CD4-positive, alpha-beta memory T cell (primary cell): ENCODE measurements at regions of chr15 and their contacts with region 1.

Region 1: DNA sequence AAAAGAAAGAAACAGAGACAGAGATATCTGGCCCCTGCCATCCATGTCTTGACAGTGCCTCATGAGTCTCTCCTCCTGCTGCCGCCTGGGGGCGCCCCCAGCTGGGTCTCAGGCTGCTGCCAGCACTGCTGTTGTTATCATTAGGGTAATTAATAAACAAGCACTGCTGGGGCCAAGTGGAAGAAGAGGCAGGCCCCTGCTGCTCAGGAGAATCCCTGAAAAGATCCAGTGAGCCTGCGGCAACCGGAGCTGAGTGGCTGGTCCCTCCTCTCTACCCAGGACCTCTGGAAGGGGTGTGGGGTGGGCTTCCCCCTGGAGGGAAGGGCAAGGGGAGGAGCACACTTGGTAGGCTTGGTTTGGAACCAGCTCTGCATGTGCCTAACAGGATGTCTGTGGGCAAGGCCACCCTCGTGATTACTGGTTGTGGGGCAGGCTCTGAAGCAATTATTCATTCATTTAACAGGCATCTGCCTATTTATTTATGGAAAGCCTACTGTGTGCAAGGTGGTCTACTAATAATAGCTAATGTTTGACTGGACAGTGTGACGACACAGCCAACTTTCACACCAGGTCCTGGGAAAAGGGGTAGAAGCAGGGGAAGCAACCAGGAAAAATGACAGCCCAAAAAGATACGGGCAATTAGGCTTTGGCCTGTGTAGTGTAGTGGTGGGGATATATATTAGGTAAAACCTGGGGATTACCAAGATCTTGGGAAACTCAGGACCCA is 1.2 kb upstream of the TYRO3 start:
- DNase-seq: peak; percentile 80 to 87 (median 84)
- H3K4me3 ChIP-seq: peak overlapping the region in 1 of 2 donors; percentile 32
- H3K4me3 Mint-ChIP-seq: peak overlapping the region; percentile 82 to 98 (median 89)
- H3K27ac ChIP-seq: peak overlapping the region; percentile 17
- H3K27ac Mint-ChIP-seq: peak overlapping the region; percentile 90 to 98 (median 93)
- H3K4me1 ChIP-seq: peaks cover 19% of the 10 kb centered on the region
- H3K4me1 Mint-ChIP-seq: peaks cover 8 to 30% (median 24%) of the 10 kb centered on the region in 4 donors
- H3K27me3 ChIP-seq: peaks cover 4% of the 10 kb centered on the region
- H3K27me3 Mint-ChIP-seq: peaks cover 0 to 9% of the 10 kb centered on the region in 2 donors

Region 2: GRCh38 chr15:41501191-41501917 is 56.5 kb before region 1 on chr15:
- CTCF ChIA-PET with region 1: no interaction called
- POLR2A ChIA-PET with region 1: interaction called, 3 read pairs
- intact Hi-C with region 1: loop called (anchors 5 kb)
- DNase-seq: peak in 3 of 5 donors; percentile 37 to 65 (median 39)
- H3K4me3 ChIP-seq: peak overlapping the region in 1 of 2 donors; percentile 50
- H3K4me3 Mint-ChIP-seq: peak overlapping the region; percentile 73 to 84 (median 78)
- H3K27ac ChIP-seq: no peak overlapping the region
- H3K27ac Mint-ChIP-seq: peak overlapping the region in 4 of 7 donors; percentile 35 to 57 (median 45)
- H3K4me1 ChIP-seq: peaks cover 19% of the 10 kb centered on the region
- H3K4me1 Mint-ChIP-seq: peaks cover 5 to 34% (median 10%) of the 10 kb centered on the region in 4 donors
- H3K27me3 ChIP-seq: peaks cover 9% of the 10 kb centered on the region
- H3K27me3 Mint-ChIP-seq: peaks cover 18 to 29% of the 10 kb centered on the region in 2 donors

Region 3: GRCh38 chr15:41575282-41575681 is 17.4 kb after region 1 on chr15:
- CTCF ChIA-PET with region 1: no interaction called
- POLR2A ChIA-PET with region 1: no interaction called
- intact Hi-C with region 1: no loop called
- DNase-seq: no peak
- H3K4me3 ChIP-seq: no peak overlapping the region
- H3K4me3 Mint-ChIP-seq: no peak overlapping the region
- H3K27ac ChIP-seq: no peak overlapping the region
- H3K27ac Mint-ChIP-seq: no peak overlapping the region
- H3K4me1 ChIP-seq: no peaks in the 10 kb centered on the region
- H3K4me1 Mint-ChIP-seq: no peaks in the 10 kb centered on the region
- H3K27me3 ChIP-seq: no peaks in the 10 kb centered on the region
- H3K27me3 Mint-ChIP-seq: no peaks in the 10 kb centered on the region

Region 4: GRCh38 chr15:41585127-41586047 is 27.6 kb after region 1 on chr15:
- CTCF ChIA-PET with region 1: interaction called, 9 read pairs
- POLR2A ChIA-PET with region 1: interaction called, 5 read pairs
- intact Hi-C with region 1: loop called (anchors 1 kb)
- DNase-seq: peak; percentile 25 to 58 (median 30)
- H3K4me3 ChIP-seq: no peak overlapping the region
- H3K4me3 Mint-ChIP-seq: peak overlapping the region; percentile 76 to 86 (median 83)
- H3K27ac ChIP-seq: no peak overlapping the region
- H3K27ac Mint-ChIP-seq: peak overlapping the region in 1 of 7 donors; percentile 47
- H3K4me1 ChIP-seq: peaks cover 4% of the 10 kb centered on the region
- H3K4me1 Mint-ChIP-seq: peaks cover 5 to 11% (median 5%) of the 10 kb centered on the region in 4 donors
- H3K27me3 ChIP-seq: peaks cover 5% of the 10 kb centered on the region
- H3K27me3 Mint-ChIP-seq: peaks cover 24 to 29% of the 10 kb centered on the region in 2 donors

Region 5: DNA sequence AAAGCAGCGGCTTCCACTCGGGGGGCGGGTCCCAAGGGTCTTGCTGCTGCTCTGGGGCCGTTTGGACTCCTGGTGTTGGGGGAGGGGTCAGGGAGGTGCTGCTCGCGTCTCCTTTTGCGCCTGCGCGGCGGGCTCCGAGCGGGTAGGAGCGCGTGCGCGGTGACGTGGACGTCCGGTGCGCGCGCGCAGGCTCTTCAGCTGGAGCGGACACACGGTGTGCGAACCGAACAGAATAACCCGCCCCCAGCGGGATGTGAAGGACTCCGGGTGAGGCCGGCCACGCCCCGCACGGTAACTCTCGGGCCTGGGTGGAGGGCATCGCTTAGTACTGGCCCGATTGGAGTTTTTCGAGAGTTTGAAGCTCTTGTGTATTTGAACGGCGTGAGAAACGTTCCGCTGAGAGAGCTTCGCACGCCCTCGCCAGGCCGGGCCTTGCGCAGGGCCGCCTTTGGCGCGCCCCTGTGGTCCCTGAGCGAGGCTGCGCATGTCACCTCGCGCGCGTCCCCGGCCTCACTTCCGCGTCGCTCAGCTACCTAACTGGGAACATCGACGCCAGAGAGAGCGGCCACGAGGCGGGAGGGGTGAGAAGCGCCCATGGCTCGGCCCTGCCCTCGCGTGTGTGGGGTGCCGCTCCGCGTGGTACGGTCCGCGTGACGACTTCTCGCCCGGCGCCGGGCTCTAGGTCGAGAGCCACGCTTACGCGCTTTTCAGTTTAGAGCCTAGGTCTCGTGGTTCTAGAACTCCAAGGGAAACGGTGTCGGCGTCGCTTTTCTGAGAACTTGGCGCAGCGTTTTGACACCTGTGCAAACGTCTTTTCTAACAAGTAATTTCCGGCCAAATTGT is 102.6 kb after region 1 on chr15 and contains the start of gene MGA:
- CTCF ChIA-PET with region 1: interaction called, 7 read pairs
- POLR2A ChIA-PET with region 1: interaction called, 7 read pairs
- intact Hi-C with region 1: loop called (anchors 1 kb)
- DNase-seq: peak; percentile 90 to 94 (median 92)
- H3K4me3 ChIP-seq: peak within 1 kb of the TSS; percentile 71 to 72
- H3K4me3 Mint-ChIP-seq: peak within 1 kb of the TSS; percentile 84 to 96 (median 94)
- H3K27ac ChIP-seq: peak within 1 kb of the TSS; percentile 67
- H3K27ac Mint-ChIP-seq: peak within 1 kb of the TSS; percentile 91 to 99 (median 97)
- H3K4me1 ChIP-seq: peaks cover 59% of the 10 kb centered on the region
- H3K4me1 Mint-ChIP-seq: peaks cover 30 to 65% (median 43%) of the 10 kb centered on the region in 4 donors
- H3K27me3 ChIP-seq: no peaks in the 10 kb centered on the region
- H3K27me3 Mint-ChIP-seq: peaks cover 0 to 1% of the 10 kb centered on the region in 2 donors
- total RNA-seq, gene MGA: 70.1 to 74.9 TPM

Region 6: GRCh38 chr15:41811432-41812195 is 253.8 kb after region 1 on chr15:
- CTCF ChIA-PET with region 1: interaction called, 13 read pairs
- POLR2A ChIA-PET with region 1: no interaction called
- intact Hi-C with region 1: loop called (anchors 1 kb)
- DNase-seq: peak; percentile 68 to 75 (median 70)
- H3K4me3 ChIP-seq: no peak overlapping the region
- H3K4me3 Mint-ChIP-seq: peak overlapping the region in 1 of 8 donors; percentile 1
- H3K27ac ChIP-seq: no peak overlapping the region
- H3K27ac Mint-ChIP-seq: peak overlapping the region in 4 of 7 donors; percentile 29 to 57 (median 37)
- H3K4me1 ChIP-seq: peaks cover 12% of the 10 kb centered on the region
- H3K4me1 Mint-ChIP-seq: peaks cover 7 to 21% (median 13%) of the 10 kb centered on the region in 4 donors
- H3K27me3 ChIP-seq: no peaks in the 10 kb centered on the region
- H3K27me3 Mint-ChIP-seq: no peaks in the 10 kb centered on the region

Region 7: GRCh38 chr15:41870689-41871081 is 312.8 kb after region 1 on chr15:
- CTCF ChIA-PET with region 1: no interaction called
- POLR2A ChIA-PET with region 1: no interaction called
- intact Hi-C with region 1: no loop called
- DNase-seq: peak; percentile 67 to 79 (median 71)
- H3K4me3 ChIP-seq: no peak overlapping the region
- H3K4me3 Mint-ChIP-seq: peak overlapping the region in 7 of 8 donors; percentile 12 to 82 (median 64)
- H3K27ac ChIP-seq: no peak overlapping the region
- H3K27ac Mint-ChIP-seq: peak overlapping the region; percentile 13 to 98 (median 96)
- H3K4me1 ChIP-seq: peaks cover 11% of the 10 kb centered on the region
- H3K4me1 Mint-ChIP-seq: peaks cover 8 to 10% (median 9%) of the 10 kb centered on the region in 4 donors
- H3K27me3 ChIP-seq: no peaks in the 10 kb centered on the region
- H3K27me3 Mint-ChIP-seq: no peaks in the 10 kb centered on the region

Region 8: GRCh38 chr15:42056934-42057779 is 499.3 kb after region 1 on chr15:
- CTCF ChIA-PET with region 1: no interaction called
- POLR2A ChIA-PET with region 1: no interaction called
- intact Hi-C with region 1: loop called (anchors 2 kb)
- DNase-seq: peak; percentile 22 to 83 (median 58)
- H3K4me3 ChIP-seq: peak overlapping the region in 1 of 2 donors; percentile 11
- H3K4me3 Mint-ChIP-seq: peak overlapping the region; percentile 18 to 68 (median 62)
- H3K27ac ChIP-seq: no peak overlapping the region
- H3K27ac Mint-ChIP-seq: peak overlapping the region; percentile 68 to 91 (median 79)
- H3K4me1 ChIP-seq: peaks cover 13% of the 10 kb centered on the region
- H3K4me1 Mint-ChIP-seq: peaks cover 2 to 26% (median 8%) of the 10 kb centered on the region in 4 donors
- H3K27me3 ChIP-seq: no peaks in the 10 kb centered on the region
- H3K27me3 Mint-ChIP-seq: peaks cover 14 to 20% of the 10 kb centered on the region in 2 donors